ENCODE measurements at regions of chr2 and their contacts with region 1.

Region 1: GRCh38 chr2:174341286-174341994 is 6.7 kb downstream of the SP9 start:
- DNase-seq: peak; percentile 75
- H3K4me3 Mint-ChIP-seq: peak overlapping the region; percentile 2
- H3K27ac Mint-ChIP-seq: no peak overlapping the region
- H3K4me1 Mint-ChIP-seq: peaks cover 11% of the 10 kb centered on the region
- H3K27me3 Mint-ChIP-seq: no peaks in the 10 kb centered on the region
- CTCF ChIP-seq: peak; percentile 97

Region 2: GRCh38 chr2:173571021-173571882 is 770.2 kb before region 1 on chr2:
- CTCF ChIA-PET with region 1: interaction called, 4 read pairs
- POLR2A ChIA-PET with region 1: no interaction called
- intact Hi-C with region 1: loop called (anchors 2 kb)
- DNase-seq: peak; percentile 54
- H3K4me3 Mint-ChIP-seq: no peak overlapping the region
- H3K27ac Mint-ChIP-seq: no peak overlapping the region
- H3K4me1 Mint-ChIP-seq: peaks cover 15% of the 10 kb centered on the region
- H3K27me3 Mint-ChIP-seq: no peaks in the 10 kb centered on the region
- CTCF ChIP-seq: peak; percentile 47

Region 3: GRCh38 chr2:173884025-173884802 is 457.2 kb before region 1 on chr2:
- CTCF ChIA-PET with region 1: interaction called, 5 read pairs
- POLR2A ChIA-PET with region 1: no interaction called
- intact Hi-C with region 1: loop called (anchors 2 kb)
- DNase-seq: peak; percentile 68
- H3K4me3 Mint-ChIP-seq: no peak overlapping the region
- H3K27ac Mint-ChIP-seq: no peak overlapping the region
- H3K4me1 Mint-ChIP-seq: no peaks in the 10 kb centered on the region
- H3K27me3 Mint-ChIP-seq: no peaks in the 10 kb centered on the region
- CTCF ChIP-seq: peak; percentile 67

Region 4: DNA sequence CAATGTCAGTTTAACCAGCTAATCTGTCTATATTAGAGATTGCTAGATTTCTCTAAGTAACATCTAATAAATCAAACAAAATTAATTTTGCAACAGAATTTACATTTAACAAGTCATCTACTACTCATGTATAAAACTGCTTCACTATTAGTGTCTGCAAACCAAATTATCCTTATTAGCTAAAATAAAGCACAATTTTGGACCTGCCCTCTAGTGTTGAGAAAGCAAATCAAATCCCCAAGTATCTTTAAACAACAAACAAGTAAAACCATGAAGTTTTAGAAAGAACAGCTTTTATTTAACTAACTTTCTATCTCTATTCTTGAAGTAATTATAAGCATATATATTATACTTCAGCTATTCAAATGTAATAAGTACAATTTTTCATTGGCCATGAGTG is 263.2 kb before region 1 on chr2:
- CTCF ChIA-PET with region 1: interaction called, 5 read pairs
- POLR2A ChIA-PET with region 1: no interaction called
- intact Hi-C with region 1: loop called (anchors 10 kb)
- DNase-seq: peak; percentile 9
- H3K4me3 Mint-ChIP-seq: no peak overlapping the region
- H3K27ac Mint-ChIP-seq: no peak overlapping the region
- H3K4me1 Mint-ChIP-seq: no peaks in the 10 kb centered on the region
- H3K27me3 Mint-ChIP-seq: no peaks in the 10 kb centered on the region
- CTCF ChIP-seq: peak; percentile 24

Region 5: DNA sequence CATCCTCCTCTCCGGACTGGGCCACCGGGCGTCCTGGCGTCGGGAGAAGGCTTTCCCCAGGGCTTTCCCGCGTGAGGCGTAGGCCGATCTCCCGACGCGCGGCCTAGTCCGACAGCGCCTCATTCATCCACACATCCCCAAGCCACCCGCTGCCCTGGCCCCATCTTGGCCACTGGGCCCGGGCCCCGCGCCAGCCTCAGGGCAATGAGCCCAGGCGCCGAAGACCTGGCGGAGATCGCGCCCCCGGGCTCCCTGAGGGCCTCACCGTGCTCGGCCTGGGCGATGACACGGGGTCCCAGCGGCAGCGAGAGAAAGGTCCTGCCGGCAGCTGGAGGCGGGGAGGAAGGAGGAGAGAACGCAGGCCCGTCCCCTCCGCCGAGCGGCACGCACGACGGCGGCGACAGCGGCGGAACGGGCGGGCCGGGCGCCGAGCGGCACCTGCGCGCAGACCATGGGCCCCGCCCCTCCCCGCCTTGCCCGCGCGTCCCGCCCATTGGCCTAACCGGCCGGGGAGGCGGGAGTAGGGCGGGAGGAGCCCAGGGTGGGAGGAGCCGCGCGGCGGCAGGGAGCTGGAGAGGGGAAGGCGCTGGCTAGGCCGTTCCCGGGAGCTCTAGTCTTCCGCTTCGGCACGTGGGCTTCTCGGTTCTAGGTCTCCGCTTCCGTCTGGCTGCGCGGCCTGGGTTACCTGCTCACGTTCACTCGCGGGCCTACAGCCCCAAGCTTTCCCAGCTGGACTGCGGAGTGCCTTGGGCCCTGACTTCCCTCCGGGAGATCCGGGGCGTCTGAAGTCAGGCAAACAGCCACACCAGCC is 93.0 kb before region 1 on chr2 and contains the start of gene OLA1:
- CTCF ChIA-PET with region 1: interaction called, 6 read pairs
- POLR2A ChIA-PET with region 1: interaction called, 5 read pairs
- intact Hi-C with region 1: loop called (anchors 2 kb)
- DNase-seq: peak; percentile 96
- H3K4me3 Mint-ChIP-seq: peak within 1 kb of the TSS; percentile 94
- H3K27ac Mint-ChIP-seq: peak within 1 kb of the TSS; percentile 94
- H3K4me1 Mint-ChIP-seq: peaks cover 13% of the 10 kb centered on the region
- H3K27me3 Mint-ChIP-seq: no peaks in the 10 kb centered on the region
- CTCF ChIP-seq: no peak
- total RNA-seq, gene OLA1: 169 and 224 TPM in 2 replicates

Measured in MCF 10A (cell line).